ENCODE measurements at regions of chr3 and their contacts with region 1.

Region 1: DNA sequence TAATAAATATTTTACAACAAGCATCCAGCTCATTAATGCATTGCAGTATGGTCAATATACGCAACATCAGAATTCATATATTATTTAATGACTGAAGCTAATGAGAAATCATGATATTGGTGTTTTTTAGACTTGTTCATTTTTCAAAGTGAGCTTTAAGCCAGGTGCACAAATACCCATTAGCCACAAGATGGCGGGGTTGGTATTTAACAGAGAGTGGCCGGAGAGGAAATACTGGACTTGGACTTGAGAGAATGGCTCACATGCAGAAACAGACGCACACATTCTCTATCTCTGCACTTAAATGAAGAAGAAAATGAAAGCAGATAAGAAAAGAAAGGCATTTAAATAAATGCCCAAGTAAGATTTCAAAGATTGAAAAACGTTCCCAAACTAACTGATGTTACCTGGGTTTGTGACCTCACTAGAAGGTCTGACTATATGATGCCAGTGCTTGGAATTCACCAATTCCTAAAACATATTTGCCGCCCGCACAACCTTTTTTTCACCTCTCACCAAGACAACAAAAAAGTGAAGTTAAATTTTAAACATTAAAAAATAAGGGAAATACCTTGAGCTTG is 21.2 kb upstream of the CRBN start:
- DNase-seq: peak; percentile 63
- H3K4me3 ChIP-seq: no peak overlapping the region
- H3K27ac ChIP-seq: no peak overlapping the region
- H3K4me1 ChIP-seq: no peaks in the 10 kb centered on the region
- CTCF ChIP-seq: peak; percentile 95

Region 2: GRCh38 chr3:3998140-3998922 is 797.6 kb after region 1 on chr3:
- CTCF ChIA-PET with region 1: no interaction called
- POLR2A ChIA-PET with region 1: no interaction called
- intact Hi-C with region 1: loop called (anchors 2 kb)
- DNase-seq: peak; percentile 47
- H3K4me3 ChIP-seq: no peak overlapping the region
- H3K27ac ChIP-seq: no peak overlapping the region
- H3K4me1 ChIP-seq: no peaks in the 10 kb centered on the region
- CTCF ChIP-seq: peak; percentile 89

Region 3: GRCh38 chr3:4290272-4290893 is 1089.7 kb after region 1 on chr3:
- CTCF ChIA-PET with region 1: no interaction called
- POLR2A ChIA-PET with region 1: no interaction called
- intact Hi-C with region 1: loop called (anchors 1 kb)
- DNase-seq: peak; percentile 43
- H3K4me3 ChIP-seq: no peak overlapping the region
- H3K27ac ChIP-seq: no peak overlapping the region
- H3K4me1 ChIP-seq: no peaks in the 10 kb centered on the region
- CTCF ChIP-seq: peak; percentile 93